ENCODE measurements at regions of chr5 and their contacts with region 1.

Region 1: GRCh38 chr5:42950440-42951292 is 89.5 kb downstream of the ANXA2R start:
- DNase-seq: peak; percentile 97 to 99 (median 99)
- H3K4me3 ChIP-seq: peak overlapping the region; percentile 66 to 79 (median 67)
- H3K4me3 Mint-ChIP-seq: peak overlapping the region; percentile 91 to 95
- H3K27ac ChIP-seq: peak overlapping the region; percentile 84 to 93
- H3K27ac Mint-ChIP-seq: peak overlapping the region; percentile 91 to 98 (median 96)
- H3K4me1 ChIP-seq: peaks cover 39 to 46% of the 10 kb centered on the region in 2 donors
- H3K4me1 Mint-ChIP-seq: peaks cover 40% of the 10 kb centered on the region
- H3K27me3 ChIP-seq: peaks cover 0 to 29% of the 10 kb centered on the region in 2 donors
- H3K27me3 Mint-ChIP-seq: peaks cover 16 to 36% (median 29%) of the 10 kb centered on the region in 3 donors
- CTCF ChIP-seq: no peak

Region 2: DNA sequence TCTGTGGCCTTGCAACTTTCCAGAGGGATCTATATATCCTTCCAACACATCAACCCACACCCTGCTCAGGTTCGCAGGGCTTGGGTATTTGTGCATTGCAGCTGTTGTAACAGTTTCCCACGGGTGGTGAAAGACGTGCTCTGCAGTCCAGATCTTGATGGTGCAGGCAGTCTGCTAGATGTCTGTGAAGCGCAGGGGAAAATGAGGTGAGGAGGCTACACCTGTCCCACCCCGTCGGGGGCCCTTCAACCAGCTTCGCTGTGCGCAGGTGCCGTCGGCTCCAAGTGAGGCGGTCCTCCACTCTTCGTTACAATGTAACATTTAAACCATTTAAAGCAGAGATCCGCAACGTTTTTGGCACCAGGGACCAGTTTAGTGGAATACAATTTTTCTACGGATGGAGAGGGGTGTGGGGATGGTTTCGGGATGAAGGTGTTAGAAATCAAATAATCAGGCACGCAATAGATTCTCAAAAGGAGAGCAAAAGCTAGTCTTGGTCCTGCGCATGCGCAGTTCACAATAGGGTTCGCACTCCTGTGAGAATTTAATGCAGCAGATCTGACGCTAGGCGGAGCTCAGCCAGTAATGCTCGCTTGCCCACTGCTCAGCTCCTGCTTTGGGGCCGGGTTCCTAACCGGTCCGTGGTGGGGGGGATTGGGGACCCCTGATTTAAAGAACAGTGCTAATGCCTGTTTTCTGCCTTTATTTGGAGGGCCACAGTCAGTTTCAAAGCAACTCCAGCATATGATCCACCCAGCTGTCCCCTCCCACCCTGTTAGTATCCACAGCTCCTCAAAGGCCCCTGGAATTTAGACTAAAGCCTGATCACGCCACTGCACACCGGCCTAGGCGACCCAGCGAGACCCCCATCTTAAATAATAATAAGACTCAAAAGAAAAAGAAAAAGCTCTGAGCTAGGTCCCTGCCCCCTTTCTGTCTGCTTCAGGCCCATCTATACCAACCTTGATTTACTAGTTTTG is 41.9 kb before region 1 on chr5:
- intact Hi-C with region 1: loop called in 1 of 2 experiments (anchors 5 kb)
- DNase-seq: peak; percentile 78 to 94 (median 87)
- H3K4me3 ChIP-seq: peak overlapping the region; percentile 39 to 76 (median 54)
- H3K4me3 Mint-ChIP-seq: peak overlapping the region; percentile 85 to 97
- H3K27ac ChIP-seq: peak overlapping the region in 1 of 2 donors; percentile 34
- H3K27ac Mint-ChIP-seq: peak overlapping the region; percentile 13 to 76 (median 44)
- H3K4me1 ChIP-seq: peaks cover 7 to 11% of the 10 kb centered on the region in 2 donors
- H3K4me1 Mint-ChIP-seq: peaks cover 12% of the 10 kb centered on the region
- H3K27me3 ChIP-seq: no peaks in the 10 kb centered on the region
- H3K27me3 Mint-ChIP-seq: peaks cover 1 to 2% (median 2%) of the 10 kb centered on the region in 3 donors
- CTCF ChIP-seq: peak; percentile 86

Region 3: DNA sequence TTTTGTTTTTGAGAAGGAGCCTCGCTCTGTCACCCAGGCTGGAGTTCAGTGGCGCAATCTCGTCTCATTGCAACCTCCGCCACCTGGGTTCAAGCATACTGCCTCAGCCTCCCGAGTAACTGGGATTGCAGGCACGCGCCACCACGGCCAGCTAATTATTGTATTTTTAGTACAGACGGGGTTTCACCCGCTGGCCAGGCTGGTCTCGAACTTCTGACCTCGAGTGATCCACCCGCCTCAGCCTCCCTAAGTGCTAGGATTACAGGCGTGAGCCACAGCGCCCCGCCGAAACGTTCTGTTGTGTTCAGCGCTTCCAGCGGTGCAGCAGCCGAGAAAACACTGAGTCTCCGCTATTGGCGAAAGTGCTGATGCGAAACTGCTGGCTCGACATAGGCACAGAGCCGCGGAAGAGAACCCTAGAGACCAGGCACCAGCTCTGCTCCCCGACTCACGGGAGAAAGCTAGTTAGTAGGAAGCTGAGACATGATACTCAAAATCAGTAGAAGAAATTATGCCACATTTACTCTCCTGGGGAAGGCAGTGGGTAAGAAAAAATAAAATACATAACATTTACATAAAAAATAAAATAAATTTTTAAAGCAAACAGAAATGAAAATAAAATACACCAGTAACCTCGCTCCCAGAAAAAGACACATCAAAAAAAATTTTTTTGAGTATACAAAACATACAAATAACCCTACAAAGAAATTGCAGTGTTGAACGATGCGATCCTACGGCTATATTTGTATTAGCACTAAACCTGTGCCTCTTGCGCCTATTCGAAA is 57.9 kb after region 1 on chr5:
- intact Hi-C with region 1: loop called in 1 of 2 experiments (anchors 5 kb)
- DNase-seq: peak; percentile 84 to 90 (median 89)
- H3K4me3 ChIP-seq: peak overlapping the region; percentile 58 to 96 (median 86)
- H3K4me3 Mint-ChIP-seq: peak overlapping the region; percentile 88 to 96
- H3K27ac ChIP-seq: peak overlapping the region; percentile 97
- H3K27ac Mint-ChIP-seq: peak overlapping the region; percentile 97 to 100 (median 99)
- H3K4me1 ChIP-seq: peaks cover 38 to 57% of the 10 kb centered on the region in 2 donors
- H3K4me1 Mint-ChIP-seq: peaks cover 40% of the 10 kb centered on the region
- H3K27me3 ChIP-seq: no peaks in the 10 kb centered on the region
- H3K27me3 Mint-ChIP-seq: peaks cover 0 to 2% (median 0%) of the 10 kb centered on the region in 3 donors
- CTCF ChIP-seq: no peak

Region 4: DNA sequence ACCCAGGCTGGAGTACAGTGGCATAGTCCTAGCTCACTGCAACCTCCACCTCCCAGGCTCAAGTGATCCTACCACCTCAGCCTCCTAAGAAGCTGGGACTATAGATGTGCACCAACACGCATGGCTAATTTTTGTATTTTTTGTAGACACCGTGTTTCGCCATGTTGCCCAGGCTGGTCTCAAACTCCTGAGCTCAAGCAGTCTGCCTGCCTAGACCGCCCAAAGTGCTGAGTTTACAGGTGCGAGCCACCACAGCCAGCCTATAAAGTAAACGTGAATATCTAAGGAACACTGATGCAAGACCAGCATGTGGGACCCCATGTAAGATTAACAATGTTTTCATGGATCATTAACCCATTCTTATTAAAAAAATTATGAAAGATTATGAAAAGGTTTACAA is 73.6 kb after region 1 on chr5:
- intact Hi-C with region 1: no loop called
- DNase-seq: no peak
- H3K4me3 ChIP-seq: no peak overlapping the region
- H3K4me3 Mint-ChIP-seq: no peak overlapping the region
- H3K27ac ChIP-seq: no peak overlapping the region
- H3K27ac Mint-ChIP-seq: no peak overlapping the region
- H3K4me1 ChIP-seq: peaks cover 12 to 17% of the 10 kb centered on the region in 2 donors
- H3K4me1 Mint-ChIP-seq: peaks cover 15% of the 10 kb centered on the region
- H3K27me3 ChIP-seq: no peaks in the 10 kb centered on the region
- H3K27me3 Mint-ChIP-seq: no peaks in the 10 kb centered on the region
- CTCF ChIP-seq: no peak

Region 5: GRCh38 chr5:43040287-43041098 is 89.8 kb after region 1 on chr5 and contains the start of gene ANXA2R:
- intact Hi-C with region 1: loop called (anchors 2 kb)
- DNase-seq: peak; percentile 90 to 96 (median 92)
- H3K4me3 ChIP-seq: peak within 1 kb of the TSS; percentile 67 to 81 (median 70)
- H3K4me3 Mint-ChIP-seq: peak within 1 kb of the TSS; percentile 90 to 95
- H3K27ac ChIP-seq: peak within 1 kb of the TSS; percentile 100
- H3K27ac Mint-ChIP-seq: peak within 1 kb of the TSS; percentile 97 to 100 (median 98)
- H3K4me1 ChIP-seq: peaks cover 36 to 43% of the 10 kb centered on the region in 2 donors
- H3K4me1 Mint-ChIP-seq: peaks cover 47% of the 10 kb centered on the region
- H3K27me3 ChIP-seq: no peaks in the 10 kb centered on the region
- H3K27me3 Mint-ChIP-seq: no peaks in the 10 kb centered on the region
- CTCF ChIP-seq: peak; percentile 87
- polyA plus RNA-seq, gene ANXA2R: 2.3 to 6.4 (median 3.1) TPM

Region 6: GRCh38 chr5:43140286-43140685 is 189.6 kb after region 1 on chr5:
- intact Hi-C with region 1: no loop called
- DNase-seq: no peak
- H3K4me3 ChIP-seq: no peak overlapping the region
- H3K4me3 Mint-ChIP-seq: no peak overlapping the region
- H3K27ac ChIP-seq: no peak overlapping the region
- H3K27ac Mint-ChIP-seq: no peak overlapping the region
- H3K4me1 ChIP-seq: no peaks in the 10 kb centered on the region
- H3K4me1 Mint-ChIP-seq: no peaks in the 10 kb centered on the region
- H3K27me3 ChIP-seq: no peaks in the 10 kb centered on the region
- H3K27me3 Mint-ChIP-seq: peaks cover 0 to 2% (median 0%) of the 10 kb centered on the region in 3 donors
- CTCF ChIP-seq: no peak

Region 7: GRCh38 chr5:43191740-43192557 is 241.3 kb after region 1 on chr5 and contains the start of gene NIM1K:
- intact Hi-C with region 1: loop called in 1 of 2 experiments (anchors 5 kb)
- DNase-seq: peak; percentile 38 to 80 (median 52)
- H3K4me3 ChIP-seq: peak within 1 kb of the TSS; percentile 21 to 64 (median 25)
- H3K4me3 Mint-ChIP-seq: peak within 1 kb of the TSS; percentile 82 to 90
- H3K27ac ChIP-seq: peak within 1 kb of the TSS in 1 of 2 donors; percentile 40
- H3K27ac Mint-ChIP-seq: peak within 1 kb of the TSS; percentile 57 to 89 (median 84)
- H3K4me1 ChIP-seq: peaks cover 24 to 29% of the 10 kb centered on the region in 2 donors
- H3K4me1 Mint-ChIP-seq: peaks cover 28% of the 10 kb centered on the region
- H3K27me3 ChIP-seq: peaks cover 25 to 33% of the 10 kb centered on the region in 2 donors
- H3K27me3 Mint-ChIP-seq: peaks cover 35 to 47% (median 42%) of the 10 kb centered on the region in 3 donors
- CTCF ChIP-seq: no peak
- polyA plus RNA-seq, gene NIM1K: 0.13 TPM in 1 of 3 donors, not detected in the others

Measured in CD14-positive monocyte (primary cell).